ENCODE measurements at regions of chr10 and their contacts with region 1.

Region 1: DNA sequence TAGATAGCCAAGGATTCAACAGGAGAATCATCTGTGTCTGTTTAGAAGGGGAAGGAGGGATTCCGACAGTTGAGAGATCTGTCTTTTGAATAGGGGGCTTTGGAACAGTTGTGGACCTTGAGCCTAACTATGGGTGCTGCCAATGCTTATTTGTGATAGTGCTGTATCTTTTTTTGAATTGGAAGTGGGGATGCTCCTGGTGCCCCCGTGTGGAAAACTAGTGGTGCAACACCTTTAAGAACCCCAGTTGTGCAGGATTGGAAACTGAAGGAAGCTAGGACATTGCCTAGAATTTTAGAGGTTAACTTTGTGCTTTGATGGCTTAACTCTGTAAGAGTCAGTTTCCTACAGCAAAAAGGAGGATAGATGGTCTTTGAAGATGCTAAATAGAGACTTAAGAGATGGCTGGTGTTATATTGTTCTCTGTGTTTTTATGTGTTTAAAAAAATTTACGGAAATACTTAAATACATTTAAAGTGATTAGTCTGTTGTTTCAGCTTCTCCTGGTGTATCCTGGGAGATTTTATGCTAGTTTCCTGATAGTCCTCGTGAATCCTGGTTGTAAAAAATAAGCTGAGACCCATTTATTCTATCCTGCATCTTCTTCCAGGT is 69.3 kb downstream of the AP3M1 start:
- DNase-seq: peak; percentile 69
- H3K4me3 ChIP-seq: no peak overlapping the region
- H3K27ac ChIP-seq: peak overlapping the region; percentile 27 to 58 (median 44)
- H3K4me1 ChIP-seq: peaks cover 0 to 60% (median 52%) of the 10 kb centered on the region in 4 donors
- H3K27me3 ChIP-seq: no peaks in the 10 kb centered on the region
- CTCF ChIP-seq: peak; percentile 54 to 69 (median 62)
- EP300 ChIP-seq: no peak
- POLR2A ChIP-seq: no peak

Region 2: GRCh38 chr10:73886085-73886529 is 195.2 kb before region 1 on chr10:
- intact Hi-C with region 1: loop called (anchors 1 kb)
- DNase-seq: peak; percentile 90
- H3K4me3 ChIP-seq: no peak overlapping the region
- H3K27ac ChIP-seq: peak overlapping the region; percentile 84 to 91 (median 86)
- H3K4me1 ChIP-seq: peaks cover 0 to 34% (median 32%) of the 10 kb centered on the region in 4 donors
- H3K27me3 ChIP-seq: no peaks in the 10 kb centered on the region
- CTCF ChIP-seq: peak; percentile 76 to 93 (median 86)
- EP300 ChIP-seq: no peak
- POLR2A ChIP-seq: no peak

Region 3: DNA sequence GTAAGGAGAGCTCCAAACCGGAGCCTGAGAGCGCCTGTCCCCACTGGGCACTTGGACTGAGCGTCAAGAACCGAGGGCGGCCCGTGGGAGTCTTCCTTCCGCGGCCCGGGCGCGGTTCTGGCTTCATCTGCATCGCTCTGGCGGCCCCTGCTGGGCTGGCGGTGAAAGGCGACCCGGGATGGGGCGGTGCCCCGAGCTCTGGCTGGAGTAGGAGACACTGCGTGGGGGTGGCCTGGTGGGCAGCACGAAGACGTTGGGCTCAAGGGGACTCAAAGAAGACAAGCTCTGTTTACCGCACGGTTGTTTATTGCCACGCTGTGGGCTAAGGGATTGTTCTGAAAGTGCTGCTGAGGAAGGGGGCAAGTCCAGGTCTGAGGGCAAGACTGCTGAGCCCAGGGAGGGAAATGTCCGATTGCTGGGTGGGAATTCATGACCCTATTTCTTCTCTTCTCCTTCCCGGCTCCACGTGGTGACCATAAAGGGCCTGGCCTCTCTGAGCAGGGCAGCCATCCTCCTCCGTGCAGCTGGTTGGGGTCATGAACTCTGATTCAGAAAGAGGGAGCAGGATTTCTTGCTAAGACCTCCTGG is 140.6 kb before region 1 on chr10:
- intact Hi-C with region 1: loop called (anchors 5 kb)
- DNase-seq: peak; percentile 92
- H3K4me3 ChIP-seq: peak overlapping the region in 3 of 4 donors; percentile 11 to 25 (median 22)
- H3K27ac ChIP-seq: peak overlapping the region; percentile 45 to 75 (median 60)
- H3K4me1 ChIP-seq: peaks cover 0 to 15% (median 11%) of the 10 kb centered on the region in 4 donors
- H3K27me3 ChIP-seq: no peaks in the 10 kb centered on the region
- CTCF ChIP-seq: peak; percentile 91 to 95 (median 94)
- EP300 ChIP-seq: no peak
- POLR2A ChIP-seq: no peak

Region 4: GRCh38 chr10:73956476-73957359 is 124.6 kb before region 1 on chr10:
- intact Hi-C with region 1: loop called (anchors 5 kb)
- DNase-seq: no peak
- H3K4me3 ChIP-seq: no peak overlapping the region
- H3K27ac ChIP-seq: peak overlapping the region; percentile 73 to 77 (median 74)
- H3K4me1 ChIP-seq: peaks cover 0 to 16% (median 13%) of the 10 kb centered on the region in 4 donors
- H3K27me3 ChIP-seq: no peaks in the 10 kb centered on the region
- CTCF ChIP-seq: no peak
- EP300 ChIP-seq: no peak
- POLR2A ChIP-seq: no peak

Region 5: DNA sequence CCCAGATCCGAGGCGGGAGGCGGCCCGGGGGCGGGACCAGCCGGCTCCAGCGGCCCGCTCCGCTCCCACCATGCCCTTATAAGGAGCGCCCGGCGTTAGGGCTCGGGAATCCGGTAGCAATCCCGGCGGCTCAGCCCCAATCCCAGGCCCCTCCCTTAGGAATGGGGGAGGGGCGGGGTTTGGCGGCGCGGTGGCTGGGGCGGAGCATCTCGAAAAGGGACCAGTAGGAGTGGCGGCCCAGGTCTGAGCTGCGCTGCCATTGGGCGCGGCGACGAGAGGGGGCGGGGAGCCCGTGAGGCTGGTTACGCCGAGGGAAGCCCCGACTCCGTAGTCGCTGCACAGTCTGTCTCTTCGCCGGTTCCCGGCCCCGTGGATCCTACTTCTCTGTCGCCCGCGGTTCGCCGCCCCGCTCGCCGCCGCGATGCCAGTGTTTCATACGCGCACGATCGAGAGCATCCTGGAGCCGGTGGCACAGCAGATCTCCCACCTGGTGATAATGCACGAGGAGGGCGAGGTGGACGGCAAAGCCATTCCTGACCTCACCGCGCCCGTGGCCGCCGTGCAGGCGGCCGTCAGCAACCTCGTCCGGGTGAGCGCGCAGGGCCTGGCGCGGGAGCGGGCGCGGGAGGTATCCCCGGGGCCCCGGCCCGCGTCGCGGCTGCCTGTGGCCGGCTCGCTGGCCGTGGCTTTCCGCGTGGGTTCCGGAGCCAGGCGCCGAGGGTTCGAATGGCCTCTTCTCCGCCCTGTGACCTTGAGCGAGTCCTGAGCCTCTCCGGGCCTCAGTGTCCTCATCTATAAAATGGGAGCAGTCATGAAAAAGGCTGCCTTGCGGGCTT is 83.3 kb before region 1 on chr10 and contains the start of gene VCL:
- intact Hi-C with region 1: loop called (anchors 2 kb)
- DNase-seq: peak; percentile 99
- H3K4me3 ChIP-seq: peak within 1 kb of the TSS; percentile 76 to 100 (median 92)
- H3K27ac ChIP-seq: peak within 1 kb of the TSS; percentile 96 to 100 (median 98)
- H3K4me1 ChIP-seq: peaks cover 0 to 43% (median 37%) of the 10 kb centered on the region in 4 donors
- H3K27me3 ChIP-seq: no peaks in the 10 kb centered on the region
- CTCF ChIP-seq: peak in 1 of 4 experiments; percentile 18
- EP300 ChIP-seq: peak in 1 of 4 donors; percentile 4
- POLR2A ChIP-seq: peak; percentile 99 to 100
- total RNA-seq, gene VCL: 179 to 451 (median 305) TPM

Region 6: GRCh38 chr10:74035303-74035702 is 46.0 kb before region 1 on chr10:
- intact Hi-C with region 1: loop called (anchors 5 kb)
- DNase-seq: no peak
- H3K4me3 ChIP-seq: no peak overlapping the region
- H3K27ac ChIP-seq: peak overlapping the region in 3 of 4 donors; percentile 46 to 73 (median 63)
- H3K4me1 ChIP-seq: peaks cover 0 to 93% (median 63%) of the 10 kb centered on the region in 4 donors
- H3K27me3 ChIP-seq: no peaks in the 10 kb centered on the region
- CTCF ChIP-seq: no peak
- EP300 ChIP-seq: no peak
- POLR2A ChIP-seq: no peak

Region 7: GRCh38 chr10:74244097-74244685 is 162.9 kb after region 1 on chr10:
- intact Hi-C with region 1: no loop called
- DNase-seq: no peak
- H3K4me3 ChIP-seq: no peak overlapping the region
- H3K27ac ChIP-seq: no peak overlapping the region
- H3K4me1 ChIP-seq: no peaks in the 10 kb centered on the region
- H3K27me3 ChIP-seq: no peaks in the 10 kb centered on the region
- CTCF ChIP-seq: peak in 2 of 4 experiments; percentile 27 to 46
- EP300 ChIP-seq: no peak
- POLR2A ChIP-seq: no peak

Measured in sigmoid colon (tissue), 7 donors.